ENCODE measurements at regions of chr22 and their contacts with region 1.

Region 1: DNA sequence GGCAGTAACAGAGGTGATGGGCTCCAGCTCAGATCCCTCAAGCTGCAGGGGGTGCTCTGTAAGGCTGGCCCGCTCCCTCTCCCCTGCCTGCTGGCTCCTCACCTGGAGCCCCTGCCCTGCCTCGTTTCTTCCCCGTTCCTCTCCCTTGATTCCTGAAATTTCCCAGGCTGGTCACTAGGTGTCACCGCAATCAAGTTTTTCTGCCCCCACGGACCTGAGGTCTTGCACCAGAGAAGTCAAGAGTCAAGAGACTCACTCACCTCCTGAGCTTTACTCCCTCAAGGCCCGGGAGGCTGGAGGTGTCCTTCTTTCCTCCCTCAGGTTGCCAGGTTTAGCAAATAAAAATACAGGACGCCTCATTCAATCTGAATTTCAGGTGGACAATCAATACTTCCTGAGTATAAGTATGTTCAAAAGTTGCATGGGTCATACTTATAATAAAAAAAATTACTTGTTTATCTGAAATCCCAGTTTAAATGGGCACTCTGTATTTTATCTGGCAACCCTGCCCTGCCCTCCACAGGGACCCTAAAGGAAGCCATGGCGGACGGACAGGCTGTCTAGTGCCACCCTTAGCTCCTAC is 69.2 kb downstream of the SCUBE1 start:
- DNase-seq: peak; percentile 41
- H3K4me3 ChIP-seq: no peak overlapping the region
- H3K27ac ChIP-seq: no peak overlapping the region
- H3K4me1 ChIP-seq: peaks cover 11% of the 10 kb centered on the region
- H3K27me3 ChIP-seq: peaks cover 2% of the 10 kb centered on the region
- CTCF ChIP-seq: peak; percentile 65 to 84

Region 2: GRCh38 chr22:43230971-43231723 is 42.8 kb before region 1 on chr22:
- CTCF ChIA-PET with region 1: interaction called, 4 read pairs
- dilution Hi-C with region 1: no loop called
- in situ Hi-C with region 1: no loop called
- intact Hi-C with region 1: loop called (anchors 1 kb)
- DNase-seq: peak; percentile 32
- H3K4me3 ChIP-seq: no peak overlapping the region
- H3K27ac ChIP-seq: no peak overlapping the region
- H3K4me1 ChIP-seq: no peaks in the 10 kb centered on the region
- H3K27me3 ChIP-seq: no peaks in the 10 kb centered on the region
- CTCF ChIP-seq: peak; percentile 86 to 91

Region 3: GRCh38 chr22:43501878-43502277 is 227.9 kb after region 1 on chr22:
- CTCF ChIA-PET with region 1: no interaction called
- dilution Hi-C with region 1: no loop called
- in situ Hi-C with region 1: no loop called
- intact Hi-C with region 1: no loop called
- DNase-seq: no peak
- H3K4me3 ChIP-seq: no peak overlapping the region
- H3K27ac ChIP-seq: no peak overlapping the region
- H3K4me1 ChIP-seq: no peaks in the 10 kb centered on the region
- H3K27me3 ChIP-seq: no peaks in the 10 kb centered on the region
- CTCF ChIP-seq: no peak

Region 4: GRCh38 chr22:43826142-43827002 is 552.4 kb after region 1 on chr22:
- CTCF ChIA-PET with region 1: no interaction called
- dilution Hi-C with region 1: no loop called
- in situ Hi-C with region 1: no loop called
- intact Hi-C with region 1: loop called (anchors 2 kb)
- DNase-seq: peak; percentile 68
- H3K4me3 ChIP-seq: no peak overlapping the region
- H3K27ac ChIP-seq: no peak overlapping the region
- H3K4me1 ChIP-seq: no peaks in the 10 kb centered on the region
- H3K27me3 ChIP-seq: peaks cover 3% of the 10 kb centered on the region
- CTCF ChIP-seq: peak; percentile 19 to 62